Activated CD4-positive, alpha-beta memory T cell treated with anti-CD3 and anti-CD28 coated beads for 36 hours (primary cell): ENCODE measurements at regions of chr19 and their contacts with region 1.

Region 1: DNA sequence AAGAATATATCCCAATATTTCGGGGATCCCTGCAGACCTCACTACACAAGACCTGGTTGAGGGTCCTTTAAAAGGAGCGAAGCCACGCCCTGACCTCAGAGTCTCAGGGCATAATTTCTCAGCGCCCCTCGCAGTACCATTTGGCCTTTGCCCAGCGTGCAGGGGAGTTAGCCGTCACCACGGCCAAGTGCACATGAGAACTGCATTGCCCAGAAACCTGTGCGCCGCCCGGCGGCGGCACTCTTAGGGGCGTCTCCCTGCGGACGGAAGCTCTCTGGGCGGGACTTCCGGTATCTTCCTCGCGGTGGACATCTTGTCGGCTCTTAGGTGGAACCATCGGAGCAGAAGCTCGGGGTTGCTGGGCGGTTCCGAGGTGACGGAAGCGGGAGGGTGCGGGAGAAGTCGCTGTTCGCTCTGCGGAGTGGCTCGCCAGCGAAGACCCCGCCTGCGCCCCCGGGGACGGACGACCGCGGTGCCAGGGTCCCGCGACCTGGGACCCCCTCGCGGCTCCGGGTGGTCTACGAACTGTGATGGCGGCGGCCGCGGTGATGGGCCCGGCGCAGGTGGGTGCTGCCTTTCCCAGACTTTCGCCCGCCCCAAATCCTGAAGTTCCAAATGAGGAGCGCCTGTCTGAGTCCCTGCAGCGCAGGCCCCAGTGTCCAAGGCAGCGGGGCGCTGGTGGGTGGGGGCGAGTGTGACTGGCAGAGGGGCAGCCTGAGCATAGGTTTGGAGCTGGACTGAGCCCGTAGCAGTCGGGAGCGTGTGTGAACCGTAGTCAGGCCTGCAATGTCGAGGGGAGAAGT is at the start of gene ZNF134:
- DNase-seq: peak; percentile 93
- H3K4me3 Mint-ChIP-seq: peak within 1 kb of the TSS; percentile 89
- H3K27ac Mint-ChIP-seq: peak within 1 kb of the TSS; percentile 67
- H3K4me1 Mint-ChIP-seq: peaks cover 19% of the 10 kb centered on the region
- H3K27me3 Mint-ChIP-seq: no peaks in the 10 kb centered on the region
- total RNA-seq, gene ZNF134: 6.7 to 8.0 TPM

Region 2: GRCh38 chr19:57559404-57560025 is 54.6 kb before region 1 on chr19 and contains the start of gene ZNF550:
- CTCF ChIA-PET with region 1: no interaction called
- POLR2A ChIA-PET with region 1: no interaction called
- intact Hi-C with region 1: no loop called
- DNase-seq: peak; percentile 91
- H3K4me3 Mint-ChIP-seq: peak within 1 kb of the TSS; percentile 90
- H3K27ac Mint-ChIP-seq: peak within 1 kb of the TSS; percentile 82
- H3K4me1 Mint-ChIP-seq: peaks cover 28% of the 10 kb centered on the region
- H3K27me3 Mint-ChIP-seq: peaks cover 4% of the 10 kb centered on the region
- total RNA-seq, gene ZNF550: 5.6 to 6.6 TPM

Region 3: DNA sequence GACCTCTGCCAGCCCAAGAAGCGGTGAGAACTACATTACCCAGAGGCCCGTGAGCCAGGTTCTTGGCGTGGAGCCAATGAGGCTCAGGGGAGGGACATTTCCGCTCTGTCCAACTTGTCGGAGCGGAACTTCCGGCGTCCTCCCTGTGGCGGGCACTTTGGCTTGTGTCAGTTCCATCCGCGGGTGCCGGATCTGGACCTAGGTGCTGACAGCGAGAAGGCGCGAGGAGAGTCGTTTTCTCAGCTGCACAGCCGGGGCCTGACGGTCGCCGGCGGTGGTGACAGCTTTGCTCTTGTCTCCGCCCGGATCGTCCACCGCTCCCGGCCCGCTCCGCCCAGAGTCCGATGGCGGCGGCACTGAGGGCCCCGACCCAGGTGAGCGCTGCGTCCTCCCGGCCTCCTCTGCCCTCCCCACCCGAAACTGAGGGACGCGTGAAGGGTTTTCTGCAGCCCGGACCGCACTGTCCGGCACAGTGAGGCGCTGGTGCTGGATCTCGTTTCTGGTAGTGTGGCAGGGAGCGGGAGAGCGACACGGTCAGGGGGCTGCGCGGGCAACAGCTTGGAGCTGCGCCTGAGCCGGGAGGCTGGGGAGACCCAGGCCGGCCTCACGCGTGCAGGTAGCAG is 14.3 kb before region 1 on chr19 and contains the start of gene ZNF530:
- CTCF ChIA-PET with region 1: interaction called, 3 read pairs
- POLR2A ChIA-PET with region 1: no interaction called
- intact Hi-C with region 1: loop called (anchors 1 kb)
- DNase-seq: peak; percentile 93
- H3K4me3 Mint-ChIP-seq: peak within 1 kb of the TSS; percentile 81
- H3K27ac Mint-ChIP-seq: no peak within 1 kb of the TSS
- H3K4me1 Mint-ChIP-seq: peaks cover 21% of the 10 kb centered on the region
- H3K27me3 Mint-ChIP-seq: no peaks in the 10 kb centered on the region
- total RNA-seq, gene ZNF530: 3.7 to 5.6 TPM